Dendritic cell treated with granulocyte-macrophage colony-stimulating factor and Interleukin-4, amounts not matched to agents 40 ng/mL and 50 ng/mL, for 4 days (primary cell): ENCODE measurements at regions of chr3 and their contacts with region 1.

Region 1: DNA sequence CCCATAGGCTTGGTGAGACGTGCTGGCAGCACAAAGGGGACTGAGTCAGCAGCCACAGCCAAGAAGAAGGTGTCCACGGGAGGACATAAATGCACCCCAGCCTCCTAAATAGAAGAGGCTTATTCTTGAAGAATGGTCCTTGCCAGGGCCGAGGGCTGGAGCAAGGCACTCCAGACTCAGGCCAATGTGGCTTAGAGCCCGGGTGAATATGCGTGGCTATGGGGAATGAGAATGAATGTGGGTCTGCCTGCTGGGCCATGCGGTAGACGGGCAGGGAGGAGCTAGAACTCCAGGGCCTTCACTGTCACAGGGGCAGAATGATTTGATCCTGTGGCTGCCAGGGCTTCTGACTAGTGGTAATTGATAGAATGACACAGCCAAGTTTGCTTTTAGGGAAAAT is 34.0 kb downstream of the DHX30 start:
- H3K4me3 Mint-ChIP-seq: no peak overlapping the region
- H3K27ac Mint-ChIP-seq: no peak overlapping the region
- H3K4me1 Mint-ChIP-seq: no peaks in the 10 kb centered on the region
- H3K27me3 Mint-ChIP-seq: no peaks in the 10 kb centered on the region

Region 2: GRCh38 chr3:47824541-47825473 is 12.2 kb before region 1 on chr3:
- intact Hi-C with region 1: no loop called
- H3K4me3 Mint-ChIP-seq: peak overlapping the region; percentile 86
- H3K27ac Mint-ChIP-seq: peak overlapping the region; percentile 86
- H3K4me1 Mint-ChIP-seq: peaks cover 31% of the 10 kb centered on the region
- H3K27me3 Mint-ChIP-seq: no peaks in the 10 kb centered on the region

Region 3: GRCh38 chr3:48151058-48151806 is 314.2 kb after region 1 on chr3:
- intact Hi-C with region 1: loop called (anchors 10 kb)
- H3K4me3 Mint-ChIP-seq: no peak overlapping the region
- H3K27ac Mint-ChIP-seq: no peak overlapping the region
- H3K4me1 Mint-ChIP-seq: peaks cover 4% of the 10 kb centered on the region
- H3K27me3 Mint-ChIP-seq: no peaks in the 10 kb centered on the region